ENCODE measurements at regions of chr10 and their contacts with region 1.

Region 1: GRCh38 chr10:17412323-17412722 is 42.1 kb downstream of the ST8SIA6 start:
- DNase-seq: no peak
- H3K4me3 ChIP-seq: no peak overlapping the region
- H3K27ac ChIP-seq: no peak overlapping the region
- H3K4me1 ChIP-seq: no peaks in the 10 kb centered on the region
- H3K27me3 ChIP-seq: no peaks in the 10 kb centered on the region
- CTCF ChIP-seq: no peak

Region 2: DNA sequence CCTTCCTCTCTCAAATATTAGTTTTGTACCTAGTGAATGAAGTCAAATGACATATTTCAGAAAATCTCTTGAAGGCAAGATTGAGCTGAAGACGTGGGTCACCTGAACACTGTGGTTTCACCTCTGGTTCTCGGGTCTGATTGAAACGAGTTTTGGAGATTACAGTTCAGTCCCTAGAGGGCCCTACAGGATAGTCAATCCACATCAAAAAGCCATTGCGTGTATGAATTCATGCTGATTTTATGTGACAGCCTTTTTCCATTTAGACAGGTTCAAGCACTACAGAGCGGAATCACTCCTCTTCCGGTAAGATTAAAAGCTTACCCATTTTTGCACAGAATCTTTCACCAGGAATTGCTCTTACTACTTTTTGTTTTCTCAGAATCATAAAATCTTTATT is 122.1 kb before region 1 on chr10:
- intact Hi-C with region 1: loop called (anchors 10 kb)
- DNase-seq: no peak
- H3K4me3 ChIP-seq: no peak overlapping the region
- H3K27ac ChIP-seq: no peak overlapping the region
- H3K4me1 ChIP-seq: no peaks in the 10 kb centered on the region
- H3K27me3 ChIP-seq: no peaks in the 10 kb centered on the region
- CTCF ChIP-seq: no peak

Measured in colonic mucosa (tissue), 4 donors.